ENCODE measurements at regions of chr6 and their contacts with region 1.

Region 1: DNA sequence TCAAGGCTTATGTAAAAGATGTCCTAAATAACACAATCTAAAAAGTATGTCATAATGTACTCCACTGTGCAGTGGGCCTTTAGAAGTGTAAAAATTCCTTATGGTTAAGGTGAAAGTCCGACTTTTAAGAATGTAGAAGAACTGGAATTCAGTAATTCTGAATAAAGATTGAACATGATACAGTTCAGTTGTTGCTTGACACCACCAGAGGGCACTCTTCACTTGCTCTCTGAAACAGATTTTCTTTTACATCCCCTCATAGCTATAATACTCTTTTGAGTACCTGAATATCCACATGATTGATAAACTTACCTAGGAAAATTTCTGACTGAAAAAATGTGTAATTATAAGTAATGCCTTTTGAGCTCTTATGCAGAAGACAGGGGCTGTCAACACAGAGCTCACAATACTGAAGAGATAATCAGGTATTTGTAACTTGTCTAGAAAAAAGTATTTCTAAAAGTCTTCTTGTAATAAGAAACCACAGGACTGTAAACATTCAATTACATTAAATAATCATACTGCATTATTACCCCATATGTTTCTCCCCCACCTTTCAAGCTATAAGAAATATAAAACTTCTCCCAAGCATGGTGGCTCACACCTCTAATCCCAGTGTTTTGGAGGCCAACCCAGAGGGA is 92.1 kb downstream of the POPDC3 start:
- DNase-seq: peak; percentile 42
- H3K4me3 ChIP-seq: no peak overlapping the region
- H3K27ac ChIP-seq: no peak overlapping the region
- H3K27me3 ChIP-seq: peaks cover 3% of the 10 kb centered on the region
- CTCF ChIP-seq: peak; percentile 84

Region 2: DNA sequence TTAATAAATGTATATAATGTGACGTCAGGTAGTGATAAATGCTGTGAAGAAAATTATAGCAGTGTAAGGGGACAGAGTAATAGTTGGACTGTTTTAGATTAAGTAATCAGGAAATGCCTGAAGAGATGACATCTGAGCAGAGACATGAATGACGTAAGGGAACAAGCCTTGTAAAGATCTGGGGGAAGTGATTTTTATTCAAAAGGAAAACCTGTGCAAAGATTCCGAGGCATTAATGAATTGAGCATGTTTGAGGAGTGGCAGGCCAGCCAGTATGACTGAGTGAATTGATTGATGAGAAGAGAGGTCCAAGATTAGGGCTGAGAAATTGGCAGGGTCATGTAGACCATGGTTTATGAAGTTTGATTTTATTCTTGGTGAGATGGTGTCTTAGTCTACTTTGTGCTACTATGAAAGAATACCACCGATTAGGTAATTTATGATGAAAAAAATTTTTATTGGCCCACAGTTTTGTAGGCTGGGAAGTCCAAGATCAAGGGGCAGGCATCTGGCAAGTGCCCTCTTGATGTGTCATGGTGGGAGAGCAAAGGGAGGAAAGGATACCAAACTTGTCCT is 35.7 kb before region 1 on chr6:
- CTCF ChIA-PET with region 1: no interaction called
- POLR2A ChIA-PET with region 1: no interaction called
- DNase-seq: no peak
- H3K4me3 ChIP-seq: no peak overlapping the region
- H3K27ac ChIP-seq: no peak overlapping the region
- H3K27me3 ChIP-seq: peaks cover 4% of the 10 kb centered on the region
- CTCF ChIP-seq: no peak

Region 3: DNA sequence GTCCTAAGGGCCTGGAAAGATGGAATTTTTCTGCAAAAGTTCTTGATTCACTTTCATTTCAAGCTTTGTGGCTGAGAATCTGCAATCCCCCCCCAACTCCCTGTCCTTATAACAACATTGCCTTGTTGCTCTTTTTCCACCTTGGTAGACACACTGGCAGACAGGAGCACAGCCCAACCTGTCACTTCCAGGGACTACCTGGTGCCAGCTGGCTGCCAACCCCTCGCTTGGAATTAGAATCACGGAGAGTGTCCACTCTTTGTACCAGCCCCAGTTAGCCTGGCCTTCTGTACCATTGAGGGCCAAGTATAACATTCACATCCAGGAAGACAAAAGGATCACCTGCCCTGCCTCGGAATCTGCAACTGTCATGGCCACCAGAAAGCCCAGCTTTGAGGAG is 17.4 kb after region 1 on chr6:
- CTCF ChIA-PET with region 1: interaction called, 53 read pairs
- POLR2A ChIA-PET with region 1: no interaction called
- DNase-seq: no peak
- H3K4me3 ChIP-seq: no peak overlapping the region
- H3K27ac ChIP-seq: no peak overlapping the region
- H3K27me3 ChIP-seq: no peaks in the 10 kb centered on the region
- CTCF ChIP-seq: no peak

Region 4: GRCh38 chr6:105346052-105346451 is 258.4 kb after region 1 on chr6:
- CTCF ChIA-PET with region 1: interaction called, 24 read pairs
- POLR2A ChIA-PET with region 1: interaction called, 3 read pairs
- DNase-seq: peak; percentile 79
- H3K4me3 ChIP-seq: no peak overlapping the region
- H3K27ac ChIP-seq: no peak overlapping the region
- H3K27me3 ChIP-seq: no peaks in the 10 kb centered on the region
- CTCF ChIP-seq: no peak

Region 5: DNA sequence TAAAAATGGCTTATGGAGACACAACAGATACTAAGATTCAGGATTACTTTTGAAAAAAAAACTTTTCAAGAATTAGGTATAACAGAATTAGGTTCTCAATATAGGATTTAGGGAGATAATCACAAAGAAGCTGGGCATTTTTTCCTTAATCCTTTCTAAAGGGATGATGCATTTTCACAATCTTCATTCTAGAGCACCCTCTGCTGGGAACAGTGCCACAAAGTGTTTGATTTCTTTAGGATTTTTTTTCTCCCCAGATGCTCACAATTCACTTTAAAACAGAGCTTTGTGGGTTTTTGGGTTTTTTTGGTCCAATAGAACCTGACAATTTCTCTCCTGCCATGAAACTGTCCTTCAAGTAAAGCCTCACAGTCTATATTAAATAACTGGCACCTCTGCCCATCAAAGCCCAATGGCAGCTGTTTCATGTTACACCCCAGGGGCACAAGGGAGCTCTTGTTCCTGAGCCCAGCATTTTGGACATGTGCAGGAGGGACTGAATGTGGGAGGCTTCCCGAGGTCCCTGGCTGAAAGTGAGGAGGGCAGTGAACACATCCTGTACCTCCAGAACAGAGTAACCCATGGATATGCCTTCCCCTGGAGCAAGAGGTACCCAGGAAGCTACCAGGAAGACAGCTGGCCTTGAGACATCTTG is 275.5 kb after region 1 on chr6:
- CTCF ChIA-PET with region 1: interaction called, 239 read pairs
- POLR2A ChIA-PET with region 1: interaction called, 4 read pairs
- DNase-seq: no peak
- H3K4me3 ChIP-seq: no peak overlapping the region
- H3K27ac ChIP-seq: no peak overlapping the region
- H3K27me3 ChIP-seq: no peaks in the 10 kb centered on the region
- CTCF ChIP-seq: peak; percentile 58

Region 6: GRCh38 chr6:105397987-105398386 is 310.3 kb after region 1 on chr6:
- CTCF ChIA-PET with region 1: interaction called, 39 read pairs
- POLR2A ChIA-PET with region 1: no interaction called
- DNase-seq: no peak
- H3K4me3 ChIP-seq: no peak overlapping the region
- H3K27ac ChIP-seq: no peak overlapping the region
- H3K27me3 ChIP-seq: no peaks in the 10 kb centered on the region
- CTCF ChIP-seq: no peak

Region 7: GRCh38 chr6:105424175-105424783 is 336.6 kb after region 1 on chr6:
- CTCF ChIA-PET with region 1: interaction called, 49 read pairs
- POLR2A ChIA-PET with region 1: no interaction called
- DNase-seq: no peak
- H3K4me3 ChIP-seq: no peak overlapping the region
- H3K27ac ChIP-seq: no peak overlapping the region
- H3K27me3 ChIP-seq: peaks cover 2% of the 10 kb centered on the region
- CTCF ChIP-seq: peak; percentile 72